ENCODE measurements at regions of chr7 and their contacts with region 1.

Region 1: GRCh38 chr7:28020302-28020940 is 160.2 kb downstream of the JAZF1 start:
- DNase-seq: peak in 6 of 9 experiments; percentile 10 to 71 (median 44)
- ATAC-seq: peak; percentile 73
- H3K4me3 ChIP-seq: no peak overlapping the region
- H3K4me3 Mint-ChIP-seq: no peak overlapping the region
- H3K27ac ChIP-seq: no peak overlapping the region
- H3K27ac Mint-ChIP-seq: no peak overlapping the region
- H3K4me1 ChIP-seq: no peaks in the 10 kb centered on the region
- H3K4me1 Mint-ChIP-seq: peaks cover 4% of the 10 kb centered on the region
- H3K27me3 ChIP-seq: no peaks in the 10 kb centered on the region
- H3K27me3 Mint-ChIP-seq: no peaks in the 10 kb centered on the region
- CTCF ChIP-seq: peak; percentile 69

Region 2: DNA sequence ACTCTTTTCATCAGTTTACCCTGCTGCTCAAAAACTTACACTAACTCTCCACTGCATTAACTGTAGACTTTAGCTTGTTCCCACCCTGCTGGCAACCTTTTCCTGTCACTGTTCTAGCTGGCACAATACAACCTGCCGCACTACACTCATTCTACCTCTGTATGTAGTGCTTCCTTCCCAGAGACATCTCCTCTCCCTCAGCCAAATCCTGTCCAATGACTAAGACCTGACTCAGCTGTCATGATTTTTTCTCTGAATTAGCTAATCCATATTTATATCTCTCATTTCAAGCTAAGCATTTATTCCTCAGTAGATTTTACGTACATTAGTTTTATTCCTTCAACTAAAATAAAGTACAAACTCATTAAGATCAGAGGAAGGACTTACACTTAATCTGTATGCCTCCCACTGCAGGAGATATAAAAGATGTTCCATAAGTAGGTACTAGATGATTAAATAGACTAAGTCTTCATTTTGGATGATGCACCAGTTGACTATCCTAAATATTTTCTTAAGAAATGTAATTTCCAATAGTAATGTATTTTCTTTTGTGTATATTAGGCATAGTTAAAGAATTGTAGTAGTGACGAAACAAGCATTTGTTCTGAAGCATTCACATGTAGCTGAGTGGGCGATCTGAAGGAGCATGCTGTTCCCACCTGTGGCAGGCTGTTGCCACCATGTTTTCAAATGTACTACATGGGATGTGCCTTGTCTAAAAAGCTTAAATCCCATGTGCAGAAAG is 1345.1 kb before region 1 on chr7:
- CTCF ChIA-PET with region 1: no interaction called
- POLR2A ChIA-PET with region 1: no interaction called
- intact Hi-C with region 1: loop called in 1 of 2 experiments (anchors 10 kb)
- DNase-seq: no peak
- ATAC-seq: no peak
- H3K4me3 ChIP-seq: no peak overlapping the region
- H3K4me3 Mint-ChIP-seq: no peak overlapping the region
- H3K27ac ChIP-seq: no peak overlapping the region
- H3K27ac Mint-ChIP-seq: no peak overlapping the region
- H3K4me1 ChIP-seq: no peaks in the 10 kb centered on the region
- H3K4me1 Mint-ChIP-seq: no peaks in the 10 kb centered on the region
- H3K27me3 ChIP-seq: no peaks in the 10 kb centered on the region
- H3K27me3 Mint-ChIP-seq: peaks cover 32% of the 10 kb centered on the region
- CTCF ChIP-seq: no peak

Region 3: DNA sequence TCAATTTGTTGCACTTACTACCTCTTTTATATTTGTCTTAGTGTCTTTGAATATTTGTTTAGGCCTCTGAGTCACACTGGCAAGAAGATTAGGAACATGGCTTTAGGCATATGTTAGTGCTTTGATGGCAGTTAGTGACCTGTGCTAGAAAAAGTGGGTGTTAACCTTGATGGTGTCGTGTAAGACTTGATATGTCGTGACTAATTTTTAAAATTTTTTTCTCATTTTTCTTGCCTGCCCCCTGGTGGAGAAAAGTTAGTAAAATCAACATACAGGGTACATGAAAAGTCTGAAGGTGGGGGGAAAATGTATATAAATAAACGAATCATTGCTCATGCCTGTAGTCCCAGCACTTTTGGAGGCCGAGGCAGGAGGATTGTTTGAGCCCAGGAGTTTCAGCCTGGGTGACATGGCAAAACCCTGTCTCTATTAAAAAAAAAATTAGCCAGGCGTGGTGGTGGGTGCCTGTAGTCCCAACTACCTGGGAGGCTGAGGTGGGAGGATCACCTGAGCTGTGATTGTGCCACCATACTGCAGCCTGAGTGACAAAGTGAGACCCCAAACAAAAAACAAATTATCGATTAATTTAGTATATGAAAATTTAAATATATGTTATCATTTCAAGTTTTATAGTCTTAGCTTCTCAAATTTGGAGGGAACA is 235.9 kb before region 1 on chr7:
- CTCF ChIA-PET with region 1: no interaction called
- POLR2A ChIA-PET with region 1: no interaction called
- intact Hi-C with region 1: loop called in 1 of 2 experiments (anchors 10 kb)
- DNase-seq: peak in 3 of 9 experiments; percentile 23 to 69 (median 61)
- ATAC-seq: peak; percentile 64
- H3K4me3 ChIP-seq: no peak overlapping the region
- H3K4me3 Mint-ChIP-seq: no peak overlapping the region
- H3K27ac ChIP-seq: no peak overlapping the region
- H3K27ac Mint-ChIP-seq: peak overlapping the region; percentile 4
- H3K4me1 ChIP-seq: no peaks in the 10 kb centered on the region
- H3K4me1 Mint-ChIP-seq: peaks cover 12% of the 10 kb centered on the region
- H3K27me3 ChIP-seq: no peaks in the 10 kb centered on the region
- H3K27me3 Mint-ChIP-seq: no peaks in the 10 kb centered on the region
- CTCF ChIP-seq: peak; percentile 80

Region 4: DNA sequence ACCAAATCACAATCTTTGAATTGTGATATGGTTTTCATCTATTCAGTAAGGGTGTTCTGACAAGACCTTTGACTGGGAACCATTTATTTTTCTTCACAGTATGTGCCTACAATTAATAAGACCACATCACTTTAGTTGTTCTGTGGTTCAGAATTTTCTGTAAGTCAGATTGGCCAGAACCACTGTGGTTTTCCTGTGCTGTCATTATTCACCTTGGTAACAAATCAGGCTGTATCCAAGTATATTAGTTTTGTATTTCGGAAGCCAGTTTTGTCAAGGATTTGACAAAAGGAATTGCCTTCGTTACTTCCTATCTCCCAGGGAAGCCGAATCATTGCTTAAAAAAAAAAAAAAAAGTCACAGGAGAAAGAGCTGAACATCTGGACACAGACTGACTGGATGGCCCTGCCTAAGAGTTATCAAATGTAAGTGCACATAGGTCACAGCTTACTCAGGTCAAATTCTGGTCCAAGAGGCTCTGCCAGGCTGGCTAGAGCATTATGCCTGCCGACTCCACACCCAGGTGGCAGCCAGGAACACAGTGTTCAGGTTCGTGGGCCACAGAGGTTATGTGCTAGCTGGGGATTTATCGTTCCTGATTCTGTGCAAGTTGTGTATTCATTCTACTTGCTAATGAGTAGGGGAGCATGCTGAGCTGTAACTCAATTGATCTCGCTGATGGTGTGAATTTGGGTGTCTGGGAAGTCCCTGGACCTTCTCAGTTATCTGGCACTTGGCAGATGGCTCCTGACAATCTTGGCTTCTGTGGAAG is 15.2 kb before region 1 on chr7:
- CTCF ChIA-PET with region 1: interaction called, 13 read pairs
- POLR2A ChIA-PET with region 1: no interaction called
- intact Hi-C with region 1: no loop called
- DNase-seq: no peak
- ATAC-seq: no peak
- H3K4me3 ChIP-seq: no peak overlapping the region
- H3K4me3 Mint-ChIP-seq: no peak overlapping the region
- H3K27ac ChIP-seq: no peak overlapping the region
- H3K27ac Mint-ChIP-seq: no peak overlapping the region
- H3K4me1 ChIP-seq: no peaks in the 10 kb centered on the region
- H3K4me1 Mint-ChIP-seq: peaks cover 9% of the 10 kb centered on the region
- H3K27me3 ChIP-seq: no peaks in the 10 kb centered on the region
- H3K27me3 Mint-ChIP-seq: no peaks in the 10 kb centered on the region
- CTCF ChIP-seq: no peak

Measured in CD8-positive, alpha-beta T cell (primary cell).